H1 (cell line): ENCODE measurements at regions of chr2 and their contacts with region 1.

Region 1: GRCh38 chr2:231706731-231707624 is 1.3 kb upstream of the PTMA start:
- DNase-seq: peak; percentile 96 to 98
- H3K4me3 ChIP-seq: peak overlapping the region; percentile 85 to 96 (median 90)
- H3K27ac ChIP-seq: peak overlapping the region; percentile 99
- H3K4me1 ChIP-seq: peaks cover 0 to 14% (median 8%) of the 10 kb centered on the region in 4 experiments; a peak in 6 of 7 replicates
- H3K27me3 ChIP-seq: no peaks in the 10 kb centered on the region
- CTCF ChIP-seq: peak in 2 of 3 experiments; percentile 72 to 98; a peak in 3 of 4 replicates
- EP300 ChIP-seq: no peak
- POLR2A ChIP-seq: peak in 1 of 2 experiments; percentile 96; a peak in 2 of 3 replicates
- RAD21 ChIP-seq: no peak; a peak in 1 of 4 replicates

Region 2: GRCh38 chr2:231655897-231656296 is 51.1 kb before region 1 on chr2:
- CTCF ChIA-PET with region 1: interaction called, 4 read pairs
- POLR2A ChIA-PET with region 1: interaction called, 53 read pairs
- DNase-seq: no peak
- H3K4me3 ChIP-seq: no peak overlapping the region
- H3K27ac ChIP-seq: no peak overlapping the region
- H3K4me1 ChIP-seq: peaks cover 6 to 9% (median 8%) of the 10 kb centered on the region in 4 experiments
- H3K27me3 ChIP-seq: peaks cover 0 to 7% (median under 1%) of the 10 kb centered on the region in 4 experiments; a peak in 5 of 7 replicates
- CTCF ChIP-seq: no peak
- EP300 ChIP-seq: no peak
- POLR2A ChIP-seq: no peak
- RAD21 ChIP-seq: no peak

Region 3: GRCh38 chr2:231680992-231681853 is 25.8 kb before region 1 on chr2:
- CTCF ChIA-PET with region 1: interaction called, 555 read pairs
- POLR2A ChIA-PET with region 1: interaction called, 1,080 read pairs
- DNase-seq: peak in 1 of 2 experiments; percentile 91
- H3K4me3 ChIP-seq: peak overlapping the region; percentile 66 to 88 (median 70)
- H3K27ac ChIP-seq: peak overlapping the region; percentile 99
- H3K4me1 ChIP-seq: peaks cover 0 to 40% (median 24%) of the 10 kb centered on the region in 4 experiments; a peak in 6 of 7 replicates
- H3K27me3 ChIP-seq: no peaks in the 10 kb centered on the region
- CTCF ChIP-seq: no peak
- EP300 ChIP-seq: no peak
- POLR2A ChIP-seq: peak in 1 of 2 experiments; percentile 80; a peak in 2 of 3 replicates
- RAD21 ChIP-seq: no peak; a peak in 1 of 4 replicates

Region 4: DNA sequence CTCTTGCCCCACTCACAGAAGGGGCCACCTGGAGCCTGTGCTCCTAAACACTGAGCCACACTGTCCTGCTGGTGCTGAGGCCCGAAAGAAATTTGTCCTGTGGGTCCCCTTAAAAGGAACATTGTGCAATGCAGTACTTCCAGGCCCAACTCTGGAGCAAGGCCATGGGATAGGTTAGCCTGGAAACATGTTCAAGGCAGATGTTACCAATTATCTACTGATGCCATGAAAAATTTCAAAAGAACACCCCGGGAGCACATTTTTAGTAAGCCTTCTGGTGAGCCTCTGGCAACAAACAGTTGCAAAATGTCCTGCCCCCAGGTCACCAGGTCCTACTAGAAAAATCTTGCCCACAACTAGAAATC is 11.0 kb before region 1 on chr2:
- CTCF ChIA-PET with region 1: interaction called, 555 read pairs
- POLR2A ChIA-PET with region 1: interaction called, 1,080 read pairs
- DNase-seq: no peak
- H3K4me3 ChIP-seq: no peak overlapping the region
- H3K27ac ChIP-seq: no peak overlapping the region
- H3K4me1 ChIP-seq: peaks cover 0 to 3% (median 1%) of the 10 kb centered on the region in 4 experiments; a peak in 1 of 7 replicates
- H3K27me3 ChIP-seq: no peaks in the 10 kb centered on the region
- CTCF ChIP-seq: no peak
- EP300 ChIP-seq: no peak
- POLR2A ChIP-seq: no peak
- RAD21 ChIP-seq: no peak

Region 5: GRCh38 chr2:231786177-231786916 is 79.4 kb after region 1 on chr2 and contains the start of gene COPS7B:
- CTCF ChIA-PET with region 1: interaction called, 4 read pairs
- POLR2A ChIA-PET with region 1: interaction called, 13 read pairs
- DNase-seq: peak; percentile 77 to 93
- H3K4me3 ChIP-seq: peak within 1 kb of the TSS; percentile 66 to 87 (median 74)
- H3K27ac ChIP-seq: peak within 1 kb of the TSS; percentile 92
- H3K4me1 ChIP-seq: peaks cover 0 to 8% (median 2%) of the 10 kb centered on the region in 4 experiments; a peak in 3 of 7 replicates
- H3K27me3 ChIP-seq: no peaks in the 10 kb centered on the region
- CTCF ChIP-seq: peak; percentile 69 to 88 (median 81)
- EP300 ChIP-seq: peak in 1 of 2 experiments; percentile 83; a peak in 1 of 3 replicates
- POLR2A ChIP-seq: peak; percentile 23 to 86
- RAD21 ChIP-seq: peak; percentile 49 to 60
- total RNA-seq, gene COPS7B: 62.2 and 67.2 TPM in 2 replicates

Region 6: GRCh38 chr2:232075080-232075479 is 368.1 kb after region 1 on chr2:
- CTCF ChIA-PET with region 1: no interaction called
- POLR2A ChIA-PET with region 1: no interaction called
- DNase-seq: no peak
- H3K4me3 ChIP-seq: no peak overlapping the region
- H3K27ac ChIP-seq: no peak overlapping the region
- H3K4me1 ChIP-seq: peaks cover 0 to 3% (median 0%) of the 10 kb centered on the region in 4 experiments; a peak in 1 of 7 replicates
- H3K27me3 ChIP-seq: no peaks in the 10 kb centered on the region
- CTCF ChIP-seq: no peak
- EP300 ChIP-seq: no peak
- POLR2A ChIP-seq: no peak
- RAD21 ChIP-seq: no peak